ENCODE measurements at regions of chr19 and their contacts with region 1.

Region 1: GRCh38 chr19:34677386-34678084 is at the start of gene ZNF302:
- DNase-seq: peak; percentile 97
- H3K4me3 ChIP-seq: peak within 1 kb of the TSS; percentile 71
- H3K27ac ChIP-seq: peak within 1 kb of the TSS; percentile 96
- H3K4me1 ChIP-seq: no peaks in the 10 kb centered on the region
- H3K27me3 ChIP-seq: no peaks in the 10 kb centered on the region
- CTCF ChIP-seq: no peak
- total RNA-seq, gene ZNF302: 11.8 to 12.6 TPM

Region 2: GRCh38 chr19:34733826-34734600 is 56.5 kb after region 1 on chr19 and contains the start of gene ZNF181:
- intact Hi-C with region 1: loop called (anchors 5 kb)
- DNase-seq: peak; percentile 92
- H3K4me3 ChIP-seq: peak within 1 kb of the TSS; percentile 48
- H3K27ac ChIP-seq: peak within 1 kb of the TSS; percentile 86
- H3K4me1 ChIP-seq: no peaks in the 10 kb centered on the region
- H3K27me3 ChIP-seq: no peaks in the 10 kb centered on the region
- CTCF ChIP-seq: no peak
- total RNA-seq, gene ZNF181: 6.2 to 7.2 TPM

Region 3: DNA sequence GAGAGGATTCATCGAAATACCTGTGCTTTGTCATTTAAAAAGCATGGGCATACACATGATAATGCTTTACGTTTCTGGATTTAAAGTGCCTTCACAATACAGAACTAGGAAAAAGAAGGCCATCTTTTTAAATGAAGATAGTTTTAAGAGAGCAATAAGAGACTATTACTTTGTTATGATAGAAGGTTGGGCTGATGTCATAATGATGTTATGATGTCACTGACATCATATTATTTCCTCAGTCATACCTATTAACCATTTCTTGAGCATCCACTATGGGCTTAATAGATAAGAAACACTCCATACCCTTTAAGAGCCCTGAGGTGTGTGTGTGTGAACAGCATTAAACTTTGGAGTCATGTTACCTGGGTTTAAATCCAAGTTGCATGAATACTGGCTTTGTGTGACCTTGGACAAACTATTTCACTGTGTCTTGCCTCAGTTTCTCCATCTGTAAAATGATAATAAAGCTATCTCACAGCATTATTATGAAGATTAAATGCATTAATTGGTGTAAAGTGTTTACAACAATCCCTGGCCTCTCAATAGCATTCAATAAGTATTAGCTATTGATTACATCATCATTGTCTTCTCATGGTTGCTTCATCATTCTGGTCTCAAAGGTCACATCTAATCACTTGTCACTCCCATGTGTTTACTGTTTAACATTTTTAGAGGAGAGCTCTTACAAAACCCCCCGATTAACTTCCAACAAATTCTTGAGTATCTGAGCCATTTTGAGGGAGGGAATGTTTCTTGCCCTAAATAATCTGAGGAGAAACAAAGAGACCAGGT is 67.6 kb after region 1 on chr19:
- intact Hi-C with region 1: no loop called
- DNase-seq: no peak
- H3K4me3 ChIP-seq: no peak overlapping the region
- H3K27ac ChIP-seq: no peak overlapping the region
- H3K4me1 ChIP-seq: no peaks in the 10 kb centered on the region
- H3K27me3 ChIP-seq: no peaks in the 10 kb centered on the region
- CTCF ChIP-seq: no peak

Region 4: GRCh38 chr19:34772697-34773554 is 95.4 kb after region 1 on chr19 and contains the start of gene ZNF599:
- intact Hi-C with region 1: loop called (anchors 5 kb)
- DNase-seq: peak; percentile 92
- H3K4me3 ChIP-seq: peak within 1 kb of the TSS; percentile 91
- H3K27ac ChIP-seq: peak within 1 kb of the TSS; percentile 51
- H3K4me1 ChIP-seq: no peaks in the 10 kb centered on the region
- H3K27me3 ChIP-seq: no peaks in the 10 kb centered on the region
- CTCF ChIP-seq: no peak
- total RNA-seq, gene ZNF599: 3.0 to 3.5 TPM